Activated naive CD4-positive, alpha-beta T cell treated with anti-CD3 and anti-CD28 coated beads for 36 hours (primary cell): ENCODE measurements at regions of chr5 and their contacts with region 1.

Region 1: GRCh38 chr5:62284946-62285891 is 20.8 kb upstream of the KIF2A start:
- DNase-seq: peak; percentile 74
- H3K4me3 Mint-ChIP-seq: no peak overlapping the region
- H3K27ac Mint-ChIP-seq: peak overlapping the region; percentile 81
- H3K4me1 Mint-ChIP-seq: peaks cover 39% of the 10 kb centered on the region
- H3K27me3 Mint-ChIP-seq: no peaks in the 10 kb centered on the region

Region 2: DNA sequence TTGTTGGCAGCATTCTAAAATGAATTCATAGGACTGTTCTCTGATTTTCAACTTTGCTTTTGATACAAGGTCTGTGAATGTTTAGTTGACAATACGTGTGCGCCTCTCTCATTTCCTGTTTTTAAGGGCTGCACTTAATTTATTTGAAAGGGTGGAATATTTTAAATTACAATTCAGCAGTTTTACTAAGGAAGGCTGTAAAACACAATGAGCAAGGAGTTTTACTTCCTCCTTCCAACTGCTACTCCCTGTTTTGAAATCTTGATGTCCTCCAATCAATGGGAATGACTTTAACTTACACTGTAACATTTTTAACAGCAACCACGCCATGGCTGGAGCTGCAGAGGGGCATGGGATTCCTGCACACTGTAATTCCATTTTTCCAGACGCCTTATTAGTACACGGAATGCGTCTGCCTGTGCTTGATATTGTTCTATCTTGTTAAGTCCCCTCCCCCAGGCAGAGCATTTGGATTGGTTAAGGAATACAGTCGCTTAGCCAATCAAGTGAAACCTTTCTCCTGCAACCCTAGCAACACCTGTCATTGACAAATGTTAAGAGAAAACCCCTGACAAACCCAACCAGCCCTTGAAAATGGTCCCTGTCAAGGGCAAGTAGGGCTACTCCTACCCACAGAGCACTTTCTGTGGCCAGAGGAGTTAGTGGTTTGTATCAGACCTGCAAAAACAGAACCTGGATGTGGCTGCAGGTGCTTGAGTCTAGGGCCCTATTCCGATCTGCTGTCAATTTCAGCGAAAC is 965.7 kb before region 1 on chr5:
- CTCF ChIA-PET with region 1: no interaction called
- intact Hi-C with region 1: no loop called
- DNase-seq: no peak
- H3K4me3 Mint-ChIP-seq: no peak overlapping the region
- H3K27ac Mint-ChIP-seq: no peak overlapping the region
- H3K4me1 Mint-ChIP-seq: peaks cover 9% of the 10 kb centered on the region
- H3K27me3 Mint-ChIP-seq: peaks cover 3% of the 10 kb centered on the region

Region 3: DNA sequence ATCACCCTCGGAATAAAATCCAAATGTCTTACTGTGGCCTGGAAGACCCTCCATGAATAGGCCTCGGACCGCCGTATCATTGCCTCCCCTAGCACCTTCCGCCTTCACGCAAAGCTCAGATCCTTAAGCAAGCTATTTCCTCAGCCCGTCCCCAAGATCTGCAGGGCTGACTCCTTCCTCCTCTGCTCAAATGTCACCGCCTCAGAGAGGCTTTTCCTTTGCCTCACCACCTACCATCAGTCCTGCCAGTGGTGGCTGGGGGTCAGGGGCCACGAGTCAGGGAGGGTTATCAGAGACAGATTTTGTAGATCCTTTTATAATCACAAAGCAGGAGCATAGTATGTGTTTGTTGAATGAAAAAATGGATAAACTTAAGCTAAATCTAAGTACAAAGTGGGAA is 53.6 kb before region 1 on chr5:
- CTCF ChIA-PET with region 1: no interaction called
- intact Hi-C with region 1: loop called (anchors 5 kb)
- DNase-seq: no peak
- H3K4me3 Mint-ChIP-seq: no peak overlapping the region
- H3K27ac Mint-ChIP-seq: no peak overlapping the region
- H3K4me1 Mint-ChIP-seq: no peaks in the 10 kb centered on the region
- H3K27me3 Mint-ChIP-seq: no peaks in the 10 kb centered on the region

Region 4: GRCh38 chr5:62268234-62268633 is 17.0 kb before region 1 on chr5:
- CTCF ChIA-PET with region 1: no interaction called
- intact Hi-C with region 1: loop called (anchors 2 kb)
- DNase-seq: no peak
- H3K4me3 Mint-ChIP-seq: no peak overlapping the region
- H3K27ac Mint-ChIP-seq: no peak overlapping the region
- H3K4me1 Mint-ChIP-seq: peaks cover 11% of the 10 kb centered on the region
- H3K27me3 Mint-ChIP-seq: no peaks in the 10 kb centered on the region